ENCODE measurements at regions of chr7 and their contacts with region 1.

Region 1: GRCh38 chr7:55572378-55573233 is at the start of gene VOPP1:
- DNase-seq: peak; percentile 57 to 78
- H3K4me3 ChIP-seq: peak within 1 kb of the TSS; percentile 78
- H3K4me1 ChIP-seq: peaks cover 27% of the 10 kb centered on the region
- H3K27me3 ChIP-seq: no peaks in the 10 kb centered on the region

Region 2: GRCh38 chr7:54758702-54759592 is 813.7 kb before region 1 on chr7 and contains the start of gene SEC61G:
- in situ Hi-C with region 1: loop called (anchors 25 kb)
- DNase-seq: peak; percentile 92 to 95
- H3K4me3 ChIP-seq: peak within 1 kb of the TSS; percentile 85
- H3K4me1 ChIP-seq: peaks cover 20% of the 10 kb centered on the region
- H3K27me3 ChIP-seq: no peaks in the 10 kb centered on the region

Measured in HAP-1 (cell line).